ENCODE measurements at regions of chr5 and their contacts with region 1.

Region 1: GRCh38 chr5:55711968-55712859 is at the start of gene SLC38A9:
- DNase-seq: peak; percentile 97
- H3K4me3 Mint-ChIP-seq: peak within 1 kb of the TSS; percentile 92
- H3K27ac Mint-ChIP-seq: peak within 1 kb of the TSS; percentile 62
- H3K4me1 Mint-ChIP-seq: peaks cover 23% of the 10 kb centered on the region
- H3K27me3 Mint-ChIP-seq: no peaks in the 10 kb centered on the region
- total RNA-seq, gene SLC38A9: 9.2 to 10.1 TPM

Region 2: DNA sequence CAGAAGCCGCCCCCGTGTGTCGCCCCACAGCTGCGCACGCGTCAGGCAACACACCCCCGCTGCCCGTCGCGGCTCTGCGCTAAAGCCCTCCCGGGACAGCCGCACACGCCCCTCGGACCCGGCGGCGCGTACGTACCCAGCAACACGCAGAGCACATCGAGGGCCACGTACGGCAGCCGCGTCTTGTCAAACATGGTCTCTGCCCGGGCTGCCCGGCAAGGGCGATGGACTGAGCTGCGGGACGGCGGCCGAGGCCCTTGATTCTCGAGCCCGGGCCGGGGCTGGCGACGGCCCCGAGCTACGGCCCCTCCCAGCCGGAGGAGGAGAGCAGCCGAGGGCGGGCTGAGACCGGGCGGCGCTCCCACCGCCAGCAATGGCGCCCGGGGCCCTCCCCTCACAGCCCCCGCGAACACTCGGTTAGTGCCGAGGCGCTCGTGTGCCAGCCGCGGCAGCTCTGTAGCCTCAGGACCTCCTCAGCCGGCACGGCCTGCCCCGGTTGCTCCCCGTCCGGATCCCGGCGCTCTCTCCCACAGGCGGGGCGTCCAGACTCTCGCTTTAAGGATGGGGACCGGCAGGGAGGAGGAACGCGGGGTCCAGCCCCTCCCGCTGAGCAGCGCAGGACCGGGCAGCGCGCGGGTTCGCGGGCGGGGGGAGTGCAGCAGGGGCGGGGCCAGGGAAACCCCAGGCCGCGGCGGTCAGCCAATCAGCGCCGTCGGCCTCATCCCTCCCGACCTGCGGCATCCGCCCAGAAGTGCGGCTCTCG is 177.6 kb before region 1 on chr5 and contains the start of gene PLPP1:
- CTCF ChIA-PET with region 1: no interaction called
- intact Hi-C with region 1: loop called (anchors 2 kb)
- DNase-seq: peak; percentile 83
- H3K4me3 Mint-ChIP-seq: peak within 1 kb of the TSS; percentile 82
- H3K27ac Mint-ChIP-seq: peak within 1 kb of the TSS; percentile 86
- H3K4me1 Mint-ChIP-seq: peaks cover 29% of the 10 kb centered on the region
- H3K27me3 Mint-ChIP-seq: no peaks in the 10 kb centered on the region
- total RNA-seq, gene PLPP1: 7.3 to 8.3 TPM

Region 3: DNA sequence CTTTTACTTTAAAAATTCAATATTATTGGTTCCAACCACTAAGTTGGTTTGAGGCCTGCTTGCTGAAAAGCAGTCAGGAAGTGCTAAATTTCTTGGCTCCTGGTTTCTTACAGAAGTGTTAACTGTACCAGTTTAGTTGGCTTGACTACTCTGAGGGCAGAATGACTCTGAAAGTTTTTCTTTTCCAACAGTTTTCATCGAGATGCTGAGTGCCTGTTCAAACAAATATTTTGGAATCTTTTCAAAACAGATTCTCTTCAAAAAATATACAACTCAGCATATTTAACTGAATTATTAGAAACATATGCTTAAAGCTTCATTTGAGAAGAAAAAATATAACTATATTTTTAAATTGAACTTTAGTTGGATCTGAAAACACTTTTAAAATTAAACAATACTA is 37.1 kb before region 1 on chr5:
- CTCF ChIA-PET with region 1: no interaction called
- intact Hi-C with region 1: no loop called
- DNase-seq: no peak
- H3K4me3 Mint-ChIP-seq: no peak overlapping the region
- H3K27ac Mint-ChIP-seq: no peak overlapping the region
- H3K4me1 Mint-ChIP-seq: no peaks in the 10 kb centered on the region
- H3K27me3 Mint-ChIP-seq: no peaks in the 10 kb centered on the region

Region 4: DNA sequence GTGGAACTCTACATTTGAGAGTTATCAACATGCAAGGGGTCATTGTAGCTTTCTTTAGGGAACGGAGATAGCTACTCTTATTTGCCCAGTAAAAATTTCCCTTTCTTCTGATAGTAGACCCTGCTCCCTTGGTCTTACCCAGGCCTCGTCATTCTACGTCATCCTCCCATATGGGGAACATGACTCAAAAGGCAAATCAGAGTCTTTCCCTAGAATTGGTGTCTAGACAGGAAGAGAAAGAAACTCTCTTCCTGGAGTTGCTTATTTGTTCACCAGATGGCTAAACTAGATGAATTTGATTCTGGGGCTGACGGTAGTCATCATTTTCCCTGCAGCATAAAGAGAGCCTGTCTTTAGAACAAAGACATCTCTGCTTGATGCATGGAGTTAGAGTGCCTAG is 12.1 kb after region 1 on chr5:
- CTCF ChIA-PET with region 1: no interaction called
- intact Hi-C with region 1: no loop called
- DNase-seq: no peak
- H3K4me3 Mint-ChIP-seq: no peak overlapping the region
- H3K27ac Mint-ChIP-seq: no peak overlapping the region
- H3K4me1 Mint-ChIP-seq: no peaks in the 10 kb centered on the region
- H3K27me3 Mint-ChIP-seq: no peaks in the 10 kb centered on the region

Region 5: GRCh38 chr5:55850839-55851674 is 138.8 kb after region 1 on chr5 and contains the start of gene IL31RA:
- CTCF ChIA-PET with region 1: no interaction called
- intact Hi-C with region 1: loop called (anchors 1 kb)
- DNase-seq: no peak
- H3K4me3 Mint-ChIP-seq: no peak within 1 kb of the TSS
- H3K27ac Mint-ChIP-seq: no peak within 1 kb of the TSS
- H3K4me1 Mint-ChIP-seq: peaks cover 34% of the 10 kb centered on the region
- H3K27me3 Mint-ChIP-seq: no peaks in the 10 kb centered on the region
- total RNA-seq, gene IL31RA: 0.31 to 0.32 TPM

Region 6: GRCh38 chr5:55903121-55903701 is 191.0 kb after region 1 on chr5:
- CTCF ChIA-PET with region 1: no interaction called
- intact Hi-C with region 1: loop called (anchors 2 kb)
- DNase-seq: peak; percentile 84
- H3K4me3 Mint-ChIP-seq: no peak overlapping the region
- H3K27ac Mint-ChIP-seq: no peak overlapping the region
- H3K4me1 Mint-ChIP-seq: peaks cover 25% of the 10 kb centered on the region
- H3K27me3 Mint-ChIP-seq: peaks cover 4% of the 10 kb centered on the region

Region 7: DNA sequence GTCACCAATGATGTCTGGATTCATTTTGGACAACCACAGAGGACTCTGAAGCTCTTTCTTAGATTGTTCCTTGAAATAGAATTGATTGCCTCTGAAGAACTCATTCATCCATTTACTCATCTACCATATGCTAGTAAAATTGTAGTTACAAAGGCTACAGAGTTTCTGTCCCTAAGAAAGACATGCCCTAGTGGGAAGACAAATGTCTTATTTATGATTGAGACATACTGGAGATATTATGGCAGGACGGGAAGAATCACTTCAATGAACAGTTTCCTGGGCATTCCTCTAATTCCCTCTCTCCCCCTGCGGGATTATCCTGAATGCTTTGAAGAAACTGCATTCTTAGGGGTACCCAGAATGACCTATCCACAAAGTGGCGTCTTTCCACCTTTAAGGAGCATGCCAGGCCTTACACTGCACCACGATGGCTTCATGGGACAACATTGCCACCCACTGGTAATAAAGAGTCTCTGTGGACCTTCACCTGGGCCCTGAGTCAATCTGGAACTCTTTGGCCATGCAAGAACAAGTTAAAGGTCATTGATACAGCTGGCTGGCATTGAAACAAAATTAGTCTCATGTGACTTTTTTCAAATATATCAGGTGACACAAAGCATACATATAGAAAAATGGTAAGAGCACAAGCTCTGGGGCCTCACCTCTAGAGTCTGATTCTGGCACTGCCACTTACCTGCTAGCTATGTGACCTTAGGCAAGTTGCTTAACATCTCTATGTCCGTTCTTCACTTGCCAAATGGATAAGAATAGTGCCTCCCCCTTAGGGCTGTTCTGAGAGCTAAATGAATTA is 488.8 kb after region 1 on chr5:
- CTCF ChIA-PET with region 1: interaction called, 4 read pairs
- intact Hi-C with region 1: loop called (anchors 5 kb)
- DNase-seq: peak; percentile 83
- H3K4me3 Mint-ChIP-seq: no peak overlapping the region
- H3K27ac Mint-ChIP-seq: no peak overlapping the region
- H3K4me1 Mint-ChIP-seq: peaks cover 28% of the 10 kb centered on the region
- H3K27me3 Mint-ChIP-seq: no peaks in the 10 kb centered on the region